A549 (cell line): ENCODE measurements at regions of chr15 and their contacts with region 1.

Region 1: DNA sequence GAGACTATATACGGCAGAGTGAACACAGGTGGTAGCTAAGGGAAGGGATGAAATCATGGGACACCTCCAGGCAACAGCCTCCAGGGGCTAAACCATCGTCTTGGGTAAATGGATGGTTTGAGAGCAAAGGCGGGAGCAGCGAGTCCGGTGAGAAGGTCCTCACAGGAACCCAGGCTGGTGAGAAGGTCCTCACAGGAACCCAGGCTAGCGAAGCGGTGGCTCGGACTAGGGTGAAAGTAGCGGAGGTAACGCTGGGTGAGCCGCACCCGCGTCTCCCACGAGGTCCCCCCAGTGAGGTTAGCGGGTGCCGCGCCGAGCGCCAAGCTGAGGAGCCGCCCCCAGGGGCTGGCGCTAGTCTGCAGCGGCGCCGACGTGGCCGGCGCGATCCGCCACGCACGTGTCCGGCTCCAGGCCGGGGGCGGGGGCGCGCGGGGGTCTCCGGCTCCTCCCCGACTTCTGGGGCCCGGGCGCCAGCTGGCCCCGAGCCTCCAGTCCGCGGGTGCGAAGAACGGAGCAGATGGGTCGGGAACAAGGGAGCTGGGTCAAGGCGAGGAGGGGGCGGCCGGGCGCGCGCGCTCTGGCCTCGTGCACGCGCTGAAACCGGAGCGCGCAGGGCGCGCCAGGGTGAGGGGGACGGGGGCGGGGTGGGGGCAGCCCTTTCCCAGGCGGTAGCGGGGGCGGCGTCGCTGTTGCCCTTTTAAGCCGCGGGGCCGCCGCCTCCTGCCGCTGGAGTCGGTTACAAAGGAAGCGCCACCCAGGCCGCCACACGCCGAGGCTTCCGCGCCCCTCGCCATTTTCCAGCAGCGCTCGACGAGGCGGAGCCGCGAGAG is at the start of gene UBE2Q2:
- DNase-seq: peak; percentile 88 to 93
- ATAC-seq: peak; percentile 77 to 80
- H3K4me3 ChIP-seq: peak within 1 kb of the TSS; percentile 66
- H3K27ac ChIP-seq: peak within 1 kb of the TSS; percentile 88 to 92
- H3K4me1 ChIP-seq: peaks cover 21% of the 10 kb centered on the region
- CTCF ChIP-seq: no peak; the same call in 2 of the 3 replicates
- EP300 ChIP-seq: no peak
- POLR2A ChIP-seq: peak; percentile 78
- RAD21 ChIP-seq: no peak
- polyA plus RNA-seq, gene UBE2Q2: 41.2 and 50.6 TPM in 2 replicates

Region 2: DNA sequence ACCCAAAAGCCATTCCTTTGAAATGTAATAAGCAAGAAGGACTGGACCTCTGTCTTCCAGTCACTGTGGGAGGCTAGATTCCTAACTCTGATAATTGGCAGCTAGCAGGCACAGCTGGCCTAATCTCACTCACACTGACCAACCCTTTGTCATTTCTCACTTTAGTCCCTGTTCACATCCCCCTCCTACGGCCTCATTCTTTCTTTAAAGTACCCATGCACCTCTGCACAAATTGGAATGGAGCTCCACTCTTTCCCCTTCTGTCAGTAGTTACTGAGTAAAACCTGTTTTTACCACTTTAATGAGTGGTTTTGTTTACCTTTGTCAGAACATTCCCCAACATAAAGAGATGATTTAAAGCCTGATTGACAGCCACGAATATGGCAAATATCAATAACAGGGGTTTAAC is 11.4 kb before region 1 on chr15:
- CTCF ChIA-PET with region 1: interaction called, 18 read pairs
- POLR2A ChIA-PET with region 1: interaction called, 10 read pairs
- DNase-seq: no peak
- ATAC-seq: no peak
- H3K4me3 ChIP-seq: no peak overlapping the region
- H3K27ac ChIP-seq: no peak overlapping the region
- H3K4me1 ChIP-seq: no peaks in the 10 kb centered on the region
- CTCF ChIP-seq: no peak
- EP300 ChIP-seq: no peak
- POLR2A ChIP-seq: no peak
- RAD21 ChIP-seq: no peak

Region 3: GRCh38 chr15:75903331-75904239 is 60.6 kb after region 1 on chr15 and contains the start of gene FBXO22:
- CTCF ChIA-PET with region 1: interaction called, 3 read pairs
- POLR2A ChIA-PET with region 1: interaction called, 19 read pairs
- DNase-seq: peak; percentile 88 to 96
- ATAC-seq: peak; percentile 97 to 98
- H3K4me3 ChIP-seq: peak within 1 kb of the TSS; percentile 88
- H3K27ac ChIP-seq: peak within 1 kb of the TSS; percentile 95 to 96
- H3K4me1 ChIP-seq: peaks cover 25% of the 10 kb centered on the region
- CTCF ChIP-seq: no peak
- EP300 ChIP-seq: no peak
- POLR2A ChIP-seq: peak; percentile 91
- RAD21 ChIP-seq: no peak
- polyA plus RNA-seq, gene FBXO22: 123 and 133 TPM in 2 replicates

Region 4: GRCh38 chr15:75966073-75966472 is 123.1 kb after region 1 on chr15:
- CTCF ChIA-PET with region 1: no interaction called
- POLR2A ChIA-PET with region 1: no interaction called
- DNase-seq: peak in 1 of 2 experiments; percentile 35
- ATAC-seq: peak; percentile 57 to 70; a peak in 4 of 6 replicates
- H3K4me3 ChIP-seq: no peak overlapping the region
- H3K27ac ChIP-seq: no peak overlapping the region
- H3K4me1 ChIP-seq: peaks cover 13% of the 10 kb centered on the region
- CTCF ChIP-seq: no peak
- EP300 ChIP-seq: no peak
- POLR2A ChIP-seq: no peak
- RAD21 ChIP-seq: no peak